ENCODE measurements at regions of chr17 and their contacts with region 1.

Region 1: GRCh38 chr17:36601303-36602029 is at the start of gene MRM1:
- DNase-seq: peak; percentile 76 to 95 (median 93)
- ATAC-seq: peak; percentile 82
- H3K4me3 ChIP-seq: peak within 1 kb of the TSS; percentile 87 to 99
- H3K4me3 Mint-ChIP-seq: peak within 1 kb of the TSS; percentile 94
- H3K27ac ChIP-seq: peak within 1 kb of the TSS; percentile 71 to 73
- H3K27ac Mint-ChIP-seq: peak within 1 kb of the TSS; percentile 95
- H3K4me1 ChIP-seq: peaks cover 17% of the 10 kb centered on the region
- H3K4me1 Mint-ChIP-seq: peaks cover 39% of the 10 kb centered on the region
- H3K27me3 ChIP-seq: no peaks in the 10 kb centered on the region
- H3K27me3 Mint-ChIP-seq: no peaks in the 10 kb centered on the region
- CTCF ChIP-seq: no peak
- total RNA-seq, gene MRM1: 1.4 TPM

Region 2: GRCh38 chr17:36008998-36009665 is 592.3 kb before region 1 on chr17:
- CTCF ChIA-PET with region 1: no interaction called
- POLR2A ChIA-PET with region 1: no interaction called
- intact Hi-C with region 1: no loop called
- DNase-seq: no peak
- ATAC-seq: no peak
- H3K4me3 ChIP-seq: no peak overlapping the region
- H3K4me3 Mint-ChIP-seq: no peak overlapping the region
- H3K27ac ChIP-seq: no peak overlapping the region
- H3K27ac Mint-ChIP-seq: no peak overlapping the region
- H3K4me1 ChIP-seq: no peaks in the 10 kb centered on the region
- H3K4me1 Mint-ChIP-seq: peaks cover 8% of the 10 kb centered on the region
- H3K27me3 ChIP-seq: no peaks in the 10 kb centered on the region
- H3K27me3 Mint-ChIP-seq: no peaks in the 10 kb centered on the region
- CTCF ChIP-seq: no peak

Region 3: GRCh38 chr17:36534840-36535668 is 66.4 kb before region 1 on chr17 and contains the starts of genes MYO19 and PIGW:
- CTCF ChIA-PET with region 1: interaction called, 11 read pairs
- POLR2A ChIA-PET with region 1: interaction called, 7 read pairs
- intact Hi-C with region 1: loop called in 1 of 2 experiments (anchors 1 kb)
- DNase-seq: peak; percentile 66 to 93 (median 83)
- ATAC-seq: peak; percentile 73
- H3K4me3 ChIP-seq: peak within 1 kb of the TSS; percentile 69 to 98
- H3K4me3 Mint-ChIP-seq: peak within 1 kb of the TSS; percentile 98
- H3K27ac ChIP-seq: peak within 1 kb of the TSS; percentile 93 to 98
- H3K27ac Mint-ChIP-seq: peak within 1 kb of the TSS; percentile 97
- H3K4me1 ChIP-seq: peaks cover 11% of the 10 kb centered on the region
- H3K4me1 Mint-ChIP-seq: peaks cover 16% of the 10 kb centered on the region
- H3K27me3 ChIP-seq: no peaks in the 10 kb centered on the region
- H3K27me3 Mint-ChIP-seq: no peaks in the 10 kb centered on the region
- CTCF ChIP-seq: no peak
- total RNA-seq, gene MYO19: 55.9 to 57.7 TPM
- total RNA-seq, gene PIGW: 2.3 to 3.4 TPM

Region 4: GRCh38 chr17:36586138-36586537 is 15.3 kb before region 1 on chr17:
- CTCF ChIA-PET with region 1: interaction called, 16 read pairs
- POLR2A ChIA-PET with region 1: interaction called, 16 read pairs
- intact Hi-C with region 1: loop called in 1 of 2 experiments (anchors 1 kb)
- DNase-seq: no peak
- ATAC-seq: no peak
- H3K4me3 ChIP-seq: no peak overlapping the region
- H3K4me3 Mint-ChIP-seq: no peak overlapping the region
- H3K27ac ChIP-seq: no peak overlapping the region
- H3K27ac Mint-ChIP-seq: no peak overlapping the region
- H3K4me1 ChIP-seq: peaks cover under 1% of the 10 kb centered on the region
- H3K4me1 Mint-ChIP-seq: peaks cover 13% of the 10 kb centered on the region
- H3K27me3 ChIP-seq: no peaks in the 10 kb centered on the region
- H3K27me3 Mint-ChIP-seq: no peaks in the 10 kb centered on the region
- CTCF ChIP-seq: no peak

Region 5: GRCh38 chr17:36705874-36706731 is 104.6 kb after region 1 on chr17:
- CTCF ChIA-PET with region 1: interaction called, 4 read pairs
- POLR2A ChIA-PET with region 1: no interaction called
- intact Hi-C with region 1: loop called in 1 of 2 experiments (anchors 2 kb)
- DNase-seq: peak in 8 of 9 experiments; percentile 13 to 72 (median 48)
- ATAC-seq: peak; percentile 69
- H3K4me3 ChIP-seq: no peak overlapping the region
- H3K4me3 Mint-ChIP-seq: no peak overlapping the region
- H3K27ac ChIP-seq: no peak overlapping the region
- H3K27ac Mint-ChIP-seq: no peak overlapping the region
- H3K4me1 ChIP-seq: no peaks in the 10 kb centered on the region
- H3K4me1 Mint-ChIP-seq: no peaks in the 10 kb centered on the region
- H3K27me3 ChIP-seq: peaks cover 11 to 12% of the 10 kb centered on the region in 2 experiments
- H3K27me3 Mint-ChIP-seq: peaks cover 33% of the 10 kb centered on the region
- CTCF ChIP-seq: peak; percentile 73

Region 6: DNA sequence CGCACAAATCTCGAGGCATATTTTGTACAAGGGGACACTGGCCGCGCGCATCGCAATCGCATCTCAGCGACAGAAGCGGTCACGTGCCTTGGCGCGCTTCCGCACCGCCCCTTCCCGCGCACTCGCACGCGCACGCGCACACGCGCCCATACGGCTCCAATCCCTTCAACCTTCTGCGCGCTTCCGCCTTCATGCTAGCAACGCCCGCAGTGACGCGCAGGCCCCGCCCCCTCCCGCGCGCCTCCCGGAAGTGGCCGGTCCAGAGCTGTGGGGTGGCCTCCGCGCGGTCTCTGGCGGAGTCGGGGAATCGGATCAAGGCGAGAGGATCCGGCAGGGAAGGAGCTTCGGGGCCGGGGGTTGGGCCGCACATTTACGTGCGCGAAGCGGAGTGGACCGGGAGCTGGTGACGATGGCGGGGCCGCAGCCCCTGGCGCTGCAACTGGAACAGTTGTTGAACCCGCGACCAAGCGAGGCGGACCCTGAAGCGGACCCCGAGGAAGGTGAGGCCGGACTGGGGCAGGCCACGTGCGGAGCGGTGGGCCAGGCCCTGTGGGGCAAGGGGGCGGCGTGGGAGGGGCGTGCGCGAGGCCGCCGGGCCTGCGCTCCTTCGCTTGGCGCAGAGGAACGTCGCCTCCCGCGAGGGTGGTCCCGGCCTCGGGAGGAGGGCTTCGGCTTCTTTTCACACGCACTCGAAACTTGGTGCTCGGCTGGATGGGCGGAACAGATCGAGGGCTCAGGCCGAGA is 347.4 kb after region 1 on chr17 and contains the start of gene AATF:
- CTCF ChIA-PET with region 1: interaction called, 3 read pairs
- POLR2A ChIA-PET with region 1: no interaction called
- intact Hi-C with region 1: loop called in 1 of 2 experiments (anchors 5 kb)
- DNase-seq: peak; percentile 82 to 99 (median 96)
- ATAC-seq: peak; percentile 91
- H3K4me3 ChIP-seq: peak within 1 kb of the TSS; percentile 81 to 91
- H3K4me3 Mint-ChIP-seq: peak within 1 kb of the TSS; percentile 98
- H3K27ac ChIP-seq: peak within 1 kb of the TSS; percentile 88 to 90
- H3K27ac Mint-ChIP-seq: peak within 1 kb of the TSS; percentile 98
- H3K4me1 ChIP-seq: peaks cover 26% of the 10 kb centered on the region
- H3K4me1 Mint-ChIP-seq: peaks cover 60% of the 10 kb centered on the region
- H3K27me3 ChIP-seq: peaks cover 28 to 34% of the 10 kb centered on the region in 2 experiments
- H3K27me3 Mint-ChIP-seq: peaks cover 31% of the 10 kb centered on the region
- CTCF ChIP-seq: no peak
- total RNA-seq, gene AATF: 49.5 to 51.5 TPM

Region 7: DNA sequence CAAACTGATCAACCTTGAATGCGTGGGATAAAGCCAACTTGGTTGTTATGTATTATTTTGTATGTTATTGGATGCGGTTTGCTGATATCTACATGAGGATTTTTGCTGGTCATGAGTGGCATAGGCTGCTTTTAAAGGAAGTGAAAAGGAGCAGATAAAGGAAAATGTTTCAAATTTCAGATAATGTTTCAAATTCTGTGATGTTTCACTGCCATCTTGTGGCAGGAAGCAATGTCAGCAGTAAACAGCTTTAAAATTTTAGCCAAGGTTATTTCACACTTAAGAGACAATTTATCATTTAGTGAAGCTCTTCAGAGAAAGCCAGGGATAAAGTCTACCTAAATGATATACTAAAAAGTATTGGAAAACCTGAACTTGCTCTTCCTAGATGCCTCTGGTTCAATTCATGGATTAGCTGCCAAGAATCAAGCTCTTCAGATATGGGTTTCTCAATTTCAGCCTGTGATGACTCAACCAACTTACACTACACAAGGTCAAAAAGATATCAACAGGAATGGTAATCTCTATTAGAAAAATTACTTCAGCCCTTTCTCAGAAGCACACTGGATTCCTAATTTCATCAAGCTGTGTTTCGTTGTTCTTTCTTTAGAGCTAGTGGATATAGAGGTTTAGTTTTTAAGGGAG is 638.3 kb after region 1 on chr17:
- CTCF ChIA-PET with region 1: interaction called, 13 read pairs
- POLR2A ChIA-PET with region 1: no interaction called
- intact Hi-C with region 1: loop called in 1 of 2 experiments (anchors 1 kb)
- DNase-seq: peak in 2 of 9 experiments; percentile 35 to 42
- ATAC-seq: no peak
- H3K4me3 ChIP-seq: no peak overlapping the region
- H3K4me3 Mint-ChIP-seq: no peak overlapping the region
- H3K27ac ChIP-seq: no peak overlapping the region
- H3K27ac Mint-ChIP-seq: no peak overlapping the region
- H3K4me1 ChIP-seq: no peaks in the 10 kb centered on the region
- H3K4me1 Mint-ChIP-seq: no peaks in the 10 kb centered on the region
- H3K27me3 ChIP-seq: no peaks in the 10 kb centered on the region
- H3K27me3 Mint-ChIP-seq: no peaks in the 10 kb centered on the region
- CTCF ChIP-seq: peak; percentile 61

Region 8: DNA sequence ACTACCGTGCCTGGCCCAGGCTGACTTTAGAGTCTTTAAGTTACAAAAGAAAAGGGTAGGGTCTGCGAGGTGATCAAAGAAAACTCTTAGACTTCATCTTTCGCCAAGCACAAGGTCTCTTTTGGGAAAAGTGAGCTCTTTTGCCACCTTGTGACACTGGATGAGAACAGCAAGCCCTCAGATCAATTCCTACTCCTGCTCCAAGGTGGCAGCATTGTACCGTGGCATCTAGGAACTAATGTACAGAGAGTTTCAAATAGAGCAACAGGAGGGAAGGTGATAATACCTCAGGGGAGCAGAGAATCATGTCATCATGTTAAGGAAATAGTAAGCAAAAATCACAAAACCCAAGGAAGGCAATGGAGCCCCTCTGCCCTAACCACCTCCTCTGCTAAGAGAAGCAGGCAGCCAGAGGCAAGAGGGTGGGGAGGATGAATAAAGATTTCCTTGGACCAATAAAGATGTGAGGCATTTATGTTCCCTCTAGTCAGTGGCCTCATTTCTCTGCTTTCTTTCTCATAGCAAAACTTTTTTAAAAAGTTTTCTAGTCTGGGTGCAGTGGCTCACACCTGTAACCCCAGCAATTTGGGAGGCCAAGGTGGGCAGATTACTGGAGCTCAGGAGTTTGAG is 772.2 kb after region 1 on chr17:
- CTCF ChIA-PET with region 1: interaction called, 11 read pairs
- POLR2A ChIA-PET with region 1: no interaction called
- intact Hi-C with region 1: loop called in 1 of 2 experiments (anchors 2 kb)
- DNase-seq: peak; percentile 30 to 80 (median 58)
- ATAC-seq: peak; percentile 98
- H3K4me3 ChIP-seq: no peak overlapping the region
- H3K4me3 Mint-ChIP-seq: no peak overlapping the region
- H3K27ac ChIP-seq: no peak overlapping the region
- H3K27ac Mint-ChIP-seq: no peak overlapping the region
- H3K4me1 ChIP-seq: no peaks in the 10 kb centered on the region
- H3K4me1 Mint-ChIP-seq: peaks cover 3% of the 10 kb centered on the region
- H3K27me3 ChIP-seq: no peaks in the 10 kb centered on the region
- H3K27me3 Mint-ChIP-seq: no peaks in the 10 kb centered on the region
- CTCF ChIP-seq: peak; percentile 96

Measured in CD8-positive, alpha-beta T cell (primary cell).